ENCODE measurements at regions of chr5 and their contacts with region 1.

Region 1: DNA sequence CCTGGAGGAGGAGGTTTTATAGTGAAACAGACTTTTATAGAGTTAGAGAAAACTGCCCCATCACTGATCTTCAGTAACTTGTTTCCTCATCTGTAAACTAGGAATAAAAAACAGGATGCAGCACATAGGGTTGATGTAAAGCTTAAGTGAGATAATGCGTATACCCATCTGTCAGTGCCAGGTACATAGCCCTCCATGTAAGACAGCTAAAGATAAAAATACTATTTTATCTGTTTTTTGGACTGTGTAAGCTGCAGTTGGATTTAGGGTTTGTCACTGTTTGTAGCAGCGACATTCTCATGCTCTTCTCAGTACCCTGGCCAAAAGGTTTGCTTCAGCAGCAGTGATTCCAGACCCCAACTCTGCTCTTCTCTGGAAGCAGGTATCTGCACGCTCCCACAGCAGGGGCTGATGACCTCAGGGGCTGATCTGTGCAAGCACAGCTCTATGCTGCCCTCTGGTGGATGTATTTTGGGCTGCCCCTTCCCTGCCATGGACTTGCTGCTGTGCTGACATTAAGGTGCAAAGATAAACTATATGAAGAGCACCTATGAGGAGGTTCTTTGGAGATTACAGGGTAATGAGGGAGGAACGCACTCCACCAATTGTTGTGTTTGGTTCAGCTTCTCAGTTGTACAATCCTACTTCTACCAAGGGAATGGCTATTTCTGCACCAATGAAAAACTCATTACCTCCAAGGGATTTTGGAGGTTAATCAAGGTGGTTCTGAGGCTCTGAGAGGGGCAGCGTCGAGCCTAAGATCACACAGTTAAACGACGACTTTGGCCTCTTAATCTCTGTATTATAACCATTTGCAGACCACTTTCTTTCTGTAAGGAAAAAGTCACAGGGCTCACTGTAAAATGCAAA is 13.1 kb downstream of the HMHB1 start:
- DNase-seq: peak; percentile 72
- CTCF ChIP-seq: peak; percentile 96

Region 2: DNA sequence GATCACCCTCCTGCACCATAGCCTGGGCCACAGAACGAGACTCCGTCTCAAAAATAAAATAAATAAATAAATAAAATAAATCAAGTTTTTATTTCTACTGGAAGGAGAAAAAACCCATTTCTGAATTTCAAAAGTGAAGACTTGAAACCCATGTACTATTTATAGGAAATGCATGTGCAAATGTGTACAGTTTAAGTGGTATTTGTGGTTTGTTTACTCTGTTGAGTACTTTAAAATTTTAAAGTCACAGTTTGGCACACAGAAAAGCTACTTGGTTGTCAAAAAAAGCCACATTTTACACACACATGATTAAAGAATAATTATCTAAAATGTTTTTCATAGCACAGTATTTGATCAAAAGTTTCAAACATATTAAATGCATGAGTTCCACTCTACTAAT is 465.2 kb before region 1 on chr5:
- CTCF ChIA-PET with region 1: interaction called, 10 read pairs
- POLR2A ChIA-PET with region 1: no interaction called
- DNase-seq: no peak
- CTCF ChIP-seq: no peak

Region 3: DNA sequence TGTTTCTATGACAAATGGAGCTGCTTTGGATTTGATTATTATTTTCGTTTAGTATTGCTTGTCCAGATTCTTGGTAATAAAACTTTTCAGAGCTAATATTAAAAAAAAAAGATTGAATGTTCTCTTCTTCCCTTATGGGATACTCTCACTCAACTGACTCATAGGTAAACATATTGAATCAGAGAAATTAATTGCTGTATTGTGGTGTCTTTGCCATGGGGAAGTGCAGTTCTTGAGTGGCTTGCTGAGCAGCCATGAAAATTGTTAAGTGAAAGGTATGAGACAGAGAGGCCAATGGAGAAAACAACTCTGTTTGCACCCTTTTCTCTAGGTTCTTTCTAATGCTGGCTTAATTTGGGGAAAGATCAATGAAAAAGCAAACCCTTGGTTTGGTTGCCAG is 163.1 kb before region 1 on chr5:
- CTCF ChIA-PET with region 1: no interaction called
- POLR2A ChIA-PET with region 1: no interaction called
- DNase-seq: no peak
- CTCF ChIP-seq: no peak

Region 4: GRCh38 chr5:143796753-143797152 is 28.3 kb before region 1 on chr5:
- CTCF ChIA-PET with region 1: interaction called, 18 read pairs
- POLR2A ChIA-PET with region 1: no interaction called
- DNase-seq: no peak
- CTCF ChIP-seq: no peak

Region 5: GRCh38 chr5:143812085-143812705 is 12.9 kb before region 1 on chr5 and contains the start of gene HMHB1:
- CTCF ChIA-PET with region 1: interaction called, 38 read pairs
- POLR2A ChIA-PET with region 1: no interaction called
- DNase-seq: peak; percentile 32
- CTCF ChIP-seq: no peak

Region 6: DNA sequence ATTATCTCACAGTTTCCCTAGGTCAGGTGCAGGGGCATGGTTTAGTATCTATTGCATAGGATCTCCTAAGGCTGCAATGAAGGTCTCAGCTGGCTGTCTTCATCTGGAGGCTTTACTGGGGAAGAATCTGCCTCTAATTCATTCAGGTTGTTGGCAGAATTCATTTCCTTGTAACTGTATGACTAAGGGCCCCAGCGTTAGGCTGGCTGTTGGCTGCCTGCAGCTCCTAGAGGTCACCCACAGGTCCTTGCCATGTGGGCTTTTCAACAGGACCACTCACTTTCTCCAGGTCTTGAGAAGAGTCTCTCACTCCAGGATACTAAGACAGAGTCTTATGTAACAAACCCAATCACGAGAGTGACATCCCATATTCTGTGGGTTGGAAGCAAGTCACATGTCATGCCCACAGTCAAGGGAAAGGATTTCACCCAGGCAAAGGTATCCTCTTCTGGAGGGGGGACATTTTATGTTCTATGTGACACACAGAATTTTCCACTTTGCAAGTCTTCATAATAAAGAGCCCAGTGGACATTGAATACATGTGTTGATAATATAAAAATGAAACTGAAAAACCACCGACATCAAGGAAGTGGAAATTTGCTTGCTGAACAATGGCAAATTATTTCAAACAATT is 25.1 kb after region 1 on chr5:
- CTCF ChIA-PET with region 1: no interaction called
- POLR2A ChIA-PET with region 1: no interaction called
- DNase-seq: no peak
- CTCF ChIP-seq: no peak

Region 7: GRCh38 chr5:144004146-144004545 is 179.1 kb after region 1 on chr5:
- CTCF ChIA-PET with region 1: no interaction called
- POLR2A ChIA-PET with region 1: no interaction called
- DNase-seq: no peak
- CTCF ChIP-seq: no peak

Region 8: DNA sequence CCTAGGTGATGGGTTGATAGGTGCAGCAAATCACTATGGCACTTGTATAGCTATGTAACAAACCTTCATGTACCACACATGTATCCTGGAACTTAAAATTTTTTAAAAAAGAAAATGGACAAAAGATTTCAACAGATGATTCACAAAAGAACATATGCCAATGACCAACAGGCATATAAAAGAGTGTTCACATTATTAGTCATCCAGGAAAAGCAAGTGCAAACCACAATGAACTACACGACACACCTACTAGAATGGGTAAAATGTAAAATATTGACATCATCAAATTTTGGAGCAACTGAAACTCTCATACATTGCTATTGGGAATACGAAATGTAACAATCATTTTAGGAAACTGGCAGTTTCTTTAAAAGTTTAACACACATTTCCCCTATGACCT is 235.5 kb after region 1 on chr5:
- CTCF ChIA-PET with region 1: no interaction called
- POLR2A ChIA-PET with region 1: no interaction called
- DNase-seq: no peak
- CTCF ChIP-seq: no peak

Measured in GM10248 (cell line).